Activated CD8-positive, alpha-beta T cell treated with anti-CD3 and anti-CD28 coated beads, Interleukin-2, amount 10 ng/mL, durations not matched to agents 7 days and 5 days (primary cell): ENCODE measurements at regions of chr21 and their contacts with region 1.

Region 1: GRCh38 chr21:33947451-33948095 is 32.0 kb upstream of the ATP5PO start:
- DNase-seq: peak; percentile 91
- ATAC-seq: peak; percentile 68
- H3K4me3 Mint-ChIP-seq: peak overlapping the region; percentile 63
- H3K27ac Mint-ChIP-seq: peak overlapping the region; percentile 98
- H3K4me1 Mint-ChIP-seq: peaks cover 75% of the 10 kb centered on the region
- H3K27me3 Mint-ChIP-seq: no peaks in the 10 kb centered on the region

Region 2: GRCh38 chr21:33961061-33961460 is 13.5 kb after region 1 on chr21:
- CTCF ChIA-PET with region 1: interaction called, 11 read pairs
- POLR2A ChIA-PET with region 1: interaction called, 30 read pairs
- DNase-seq: no peak
- ATAC-seq: no peak
- H3K4me3 Mint-ChIP-seq: no peak overlapping the region
- H3K27ac Mint-ChIP-seq: no peak overlapping the region
- H3K4me1 Mint-ChIP-seq: peaks cover 4% of the 10 kb centered on the region
- H3K27me3 Mint-ChIP-seq: no peaks in the 10 kb centered on the region

Region 3: GRCh38 chr21:33976082-33977016 is 28.8 kb after region 1 on chr21:
- CTCF ChIA-PET with region 1: interaction called, 6 read pairs
- POLR2A ChIA-PET with region 1: interaction called, 64 read pairs
- DNase-seq: peak; percentile 66
- ATAC-seq: peak; percentile 57
- H3K4me3 Mint-ChIP-seq: peak overlapping the region; percentile 54
- H3K27ac Mint-ChIP-seq: peak overlapping the region; percentile 95
- H3K4me1 Mint-ChIP-seq: peaks cover 73% of the 10 kb centered on the region
- H3K27me3 Mint-ChIP-seq: no peaks in the 10 kb centered on the region

Region 4: DNA sequence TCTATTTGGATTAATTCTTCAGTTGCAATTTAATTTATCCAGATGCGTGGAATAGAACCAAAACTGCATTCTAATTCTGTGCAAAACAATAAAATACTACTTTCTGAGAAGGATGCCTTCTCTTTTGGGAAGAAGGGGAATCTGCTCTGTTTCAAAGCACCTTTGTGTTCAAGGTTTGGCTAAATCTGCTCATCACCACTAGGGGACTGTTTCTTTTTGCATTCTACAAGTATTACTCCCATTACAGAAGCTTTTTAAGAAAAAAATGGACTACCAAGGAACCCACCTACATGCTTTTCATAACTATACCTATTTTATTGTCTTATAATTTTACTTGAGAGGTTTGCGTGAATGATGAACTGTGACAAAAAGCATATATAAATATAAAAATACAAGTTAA is 144.0 kb after region 1 on chr21:
- CTCF ChIA-PET with region 1: interaction called, 5 read pairs
- POLR2A ChIA-PET with region 1: interaction called, 12 read pairs
- DNase-seq: no peak
- ATAC-seq: no peak
- H3K4me3 Mint-ChIP-seq: no peak overlapping the region
- H3K27ac Mint-ChIP-seq: no peak overlapping the region
- H3K4me1 Mint-ChIP-seq: peaks cover 43% of the 10 kb centered on the region
- H3K27me3 Mint-ChIP-seq: no peaks in the 10 kb centered on the region

Region 5: DNA sequence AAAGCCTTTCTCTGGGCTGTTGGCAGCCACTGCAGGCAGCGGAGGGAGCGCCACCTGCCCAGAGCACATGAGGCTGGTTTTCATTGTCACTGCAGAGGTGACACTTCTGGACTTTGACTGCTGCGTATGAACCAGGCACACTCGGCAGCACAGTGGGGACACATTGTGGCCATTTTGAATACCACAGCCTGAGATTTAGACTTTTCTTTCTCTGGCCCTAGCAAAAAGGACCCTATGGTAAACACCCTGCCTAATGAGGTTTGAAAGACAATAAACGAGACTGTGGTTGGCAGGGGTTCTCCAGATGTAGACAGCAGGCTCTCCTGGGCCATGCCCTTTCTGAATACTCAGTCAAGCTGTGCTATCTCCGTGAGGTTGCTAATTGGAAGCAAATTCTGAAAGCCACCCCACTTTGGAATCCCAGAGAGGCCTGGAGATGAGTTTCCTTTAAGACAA is 404.2 kb after region 1 on chr21:
- CTCF ChIA-PET with region 1: interaction called, 10 read pairs
- POLR2A ChIA-PET with region 1: no interaction called
- DNase-seq: peak; percentile 51
- ATAC-seq: peak; percentile 70
- H3K4me3 Mint-ChIP-seq: no peak overlapping the region
- H3K27ac Mint-ChIP-seq: no peak overlapping the region
- H3K4me1 Mint-ChIP-seq: peaks cover 11% of the 10 kb centered on the region
- H3K27me3 Mint-ChIP-seq: peaks cover 15% of the 10 kb centered on the region